ENCODE measurements at regions of chr2 and their contacts with region 1.

Region 1: GRCh38 chr2:98835831-98836385 is 100.1 kb downstream of the CRACDL start:
- DNase-seq: peak; percentile 80
- H3K4me3 Mint-ChIP-seq: peak overlapping the region; percentile 56
- H3K27ac Mint-ChIP-seq: peak overlapping the region; percentile 76
- H3K4me1 Mint-ChIP-seq: peaks cover 40% of the 10 kb centered on the region
- H3K27me3 Mint-ChIP-seq: peaks cover 11% of the 10 kb centered on the region

Region 2: DNA sequence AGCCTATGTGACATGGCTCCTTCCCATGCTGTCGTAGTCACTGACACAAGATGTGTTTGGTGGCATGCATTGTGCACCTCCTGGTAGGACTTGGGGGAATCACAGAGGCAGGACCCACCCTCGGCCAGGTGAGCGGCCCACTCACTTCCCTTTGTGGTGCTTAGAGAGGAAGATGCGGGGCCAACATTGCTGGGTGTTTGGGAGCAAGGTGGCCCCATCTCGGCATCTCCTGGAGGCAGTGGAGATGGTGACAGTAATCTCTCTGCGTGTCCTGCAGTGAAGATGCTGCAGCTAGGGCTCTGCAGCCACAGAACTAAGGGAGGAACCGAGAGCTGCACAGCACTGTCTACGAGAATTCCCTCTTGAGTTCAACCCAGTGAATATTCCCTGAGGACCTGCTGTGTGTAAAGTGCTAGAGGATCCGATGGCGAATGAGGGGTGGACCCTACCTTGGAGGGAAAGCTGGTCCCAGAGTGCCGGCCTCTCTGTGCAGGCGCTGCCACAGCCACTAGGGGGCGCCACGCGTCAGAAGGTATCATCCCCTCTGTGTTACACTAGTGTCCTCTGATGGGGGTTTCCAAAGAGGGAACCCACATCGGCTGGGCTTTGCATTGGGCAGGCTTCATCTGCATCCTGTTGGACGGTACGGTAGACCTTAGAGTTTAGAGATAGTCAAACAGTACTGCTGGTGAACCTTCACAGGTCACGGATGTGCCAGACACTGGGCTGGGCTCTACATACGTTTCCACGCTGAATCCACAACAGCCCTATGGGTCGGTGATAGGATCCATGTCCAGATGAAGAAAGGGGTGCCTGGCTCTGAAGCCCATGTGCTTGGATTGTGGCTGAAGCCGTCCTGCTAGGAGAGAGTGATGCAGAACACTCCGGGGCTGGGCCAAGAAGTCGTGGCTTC is 266.8 kb before region 1 on chr2:
- intact Hi-C with region 1: loop called (anchors 1 kb)
- DNase-seq: peak; percentile 90
- H3K4me3 Mint-ChIP-seq: no peak overlapping the region
- H3K27ac Mint-ChIP-seq: peak overlapping the region; percentile 16
- H3K4me1 Mint-ChIP-seq: peaks cover 6% of the 10 kb centered on the region
- H3K27me3 Mint-ChIP-seq: no peaks in the 10 kb centered on the region

Region 3: DNA sequence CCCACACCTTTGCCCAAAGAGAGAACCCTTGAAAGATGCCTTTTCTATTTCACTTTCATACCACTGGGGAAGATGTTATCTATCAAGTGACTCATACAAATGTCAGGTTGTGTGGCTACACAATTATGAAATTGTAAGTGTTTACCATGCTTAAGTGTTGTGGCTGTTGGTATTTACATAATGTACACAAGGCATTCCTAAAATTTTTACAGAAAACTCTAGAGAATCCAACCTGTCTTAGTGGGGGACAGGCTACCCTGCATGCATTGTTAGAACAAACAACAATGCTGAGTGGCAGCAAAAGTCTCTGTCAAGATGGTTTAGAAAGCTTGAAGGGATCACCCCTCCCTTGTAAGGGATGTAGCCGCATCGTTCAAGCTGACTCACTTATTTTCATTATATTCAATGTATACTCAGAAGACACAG is 99.4 kb before region 1 on chr2:
- intact Hi-C with region 1: loop called (anchors 2 kb)
- DNase-seq: peak; percentile 81
- H3K4me3 Mint-ChIP-seq: peak overlapping the region; percentile 69
- H3K27ac Mint-ChIP-seq: peak overlapping the region; percentile 80
- H3K4me1 Mint-ChIP-seq: peaks cover 58% of the 10 kb centered on the region
- H3K27me3 Mint-ChIP-seq: no peaks in the 10 kb centered on the region

Region 4: GRCh38 chr2:99171377-99172140 is 335.7 kb after region 1 on chr2:
- intact Hi-C with region 1: loop called (anchors 10 kb)
- DNase-seq: no peak
- H3K4me3 Mint-ChIP-seq: no peak overlapping the region
- H3K27ac Mint-ChIP-seq: no peak overlapping the region
- H3K4me1 Mint-ChIP-seq: peaks cover 21% of the 10 kb centered on the region
- H3K27me3 Mint-ChIP-seq: no peaks in the 10 kb centered on the region

Measured in activated CD4-positive, alpha-beta T cell treated with anti-CD3 and anti-CD28 coated beads, Interleukin-2, amount 10 ng/mL, durations not matched to agents 24 days and 14 days (primary cell).